Aorta (tissue), 5 donors: ENCODE measurements at regions of chr18 and their contacts with region 1.

Region 1: DNA sequence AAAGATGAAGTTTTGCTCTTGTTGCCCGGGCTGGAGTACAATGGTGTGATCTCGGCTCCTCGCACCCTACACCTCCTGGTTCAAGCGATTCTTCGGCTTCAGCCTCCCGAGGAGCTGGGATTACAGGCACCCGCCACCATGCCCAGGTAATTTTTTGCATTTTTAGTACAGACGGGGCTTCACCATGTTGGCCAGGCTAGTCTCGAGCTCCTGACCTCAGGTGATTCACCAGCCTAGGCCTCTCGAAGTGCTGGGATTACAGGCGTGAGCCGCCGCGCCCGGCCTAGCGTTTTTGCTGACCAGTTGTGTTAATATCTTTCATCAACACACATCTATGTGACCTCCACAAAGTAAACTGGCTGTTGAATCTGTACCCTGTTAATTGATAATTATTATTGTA is 49.4 kb upstream of the KLHL14 start:
- DNase-seq: no peak
- ATAC-seq: no peak
- H3K4me3 ChIP-seq: no peak overlapping the region
- H3K27ac ChIP-seq: no peak overlapping the region
- H3K4me1 ChIP-seq: no peaks in the 10 kb centered on the region
- H3K27me3 ChIP-seq: no peaks in the 10 kb centered on the region

Region 2: DNA sequence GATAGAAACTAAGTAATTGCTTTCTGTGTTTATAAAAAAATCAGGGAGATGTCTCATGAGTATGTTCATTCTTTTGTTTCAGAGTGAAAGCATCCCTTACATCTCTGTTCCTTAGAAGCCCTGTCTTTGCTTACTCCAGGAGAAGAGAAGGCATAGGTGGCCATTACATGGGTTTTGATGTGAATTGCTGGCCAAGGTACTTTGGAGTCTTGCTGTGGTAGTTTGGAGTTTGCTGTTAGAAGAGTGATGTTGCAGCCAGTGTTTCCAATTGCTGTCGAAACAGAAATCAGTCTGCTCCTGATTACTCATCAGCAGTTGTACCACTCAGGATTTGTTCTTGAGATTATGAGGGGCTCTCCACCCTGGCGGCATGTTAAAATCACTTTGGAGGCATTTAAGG is 48.4 kb after region 1 on chr18:
- intact Hi-C with region 1: loop called in 1 of 2 experiments (anchors 5 kb)
- DNase-seq: no peak
- ATAC-seq: no peak
- H3K4me3 ChIP-seq: no peak overlapping the region
- H3K27ac ChIP-seq: no peak overlapping the region
- H3K4me1 ChIP-seq: no peaks in the 10 kb centered on the region
- H3K27me3 ChIP-seq: no peaks in the 10 kb centered on the region